ENCODE measurements at regions of chr4 and their contacts with region 1.

Region 1: GRCh38 chr4:87679449-87680169 is 29.5 kb downstream of the DMP1 start:
- DNase-seq: peak; percentile 14 to 87 (median 69)

Region 2: DNA sequence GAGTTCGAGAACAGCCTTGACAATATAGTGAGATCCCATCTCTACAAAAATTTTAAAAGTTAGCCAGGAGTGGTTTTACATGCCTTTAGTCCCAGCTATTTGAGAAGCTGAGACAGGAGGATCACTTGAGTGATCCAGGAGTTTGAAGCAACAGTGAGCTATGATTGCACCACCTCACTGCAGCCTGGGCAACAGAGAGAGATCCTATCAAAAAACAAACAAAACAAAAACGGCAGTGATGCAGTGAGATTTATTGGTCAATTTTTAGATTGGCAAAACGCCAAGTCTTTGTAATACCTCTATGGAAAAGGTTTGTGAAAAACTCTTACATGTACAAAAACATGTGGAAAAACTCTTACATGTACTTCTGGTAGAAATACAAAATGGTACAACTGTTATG is 994.2 kb before region 1 on chr4:
- intact Hi-C with region 1: no loop called
- DNase-seq: no peak

Region 3: DNA sequence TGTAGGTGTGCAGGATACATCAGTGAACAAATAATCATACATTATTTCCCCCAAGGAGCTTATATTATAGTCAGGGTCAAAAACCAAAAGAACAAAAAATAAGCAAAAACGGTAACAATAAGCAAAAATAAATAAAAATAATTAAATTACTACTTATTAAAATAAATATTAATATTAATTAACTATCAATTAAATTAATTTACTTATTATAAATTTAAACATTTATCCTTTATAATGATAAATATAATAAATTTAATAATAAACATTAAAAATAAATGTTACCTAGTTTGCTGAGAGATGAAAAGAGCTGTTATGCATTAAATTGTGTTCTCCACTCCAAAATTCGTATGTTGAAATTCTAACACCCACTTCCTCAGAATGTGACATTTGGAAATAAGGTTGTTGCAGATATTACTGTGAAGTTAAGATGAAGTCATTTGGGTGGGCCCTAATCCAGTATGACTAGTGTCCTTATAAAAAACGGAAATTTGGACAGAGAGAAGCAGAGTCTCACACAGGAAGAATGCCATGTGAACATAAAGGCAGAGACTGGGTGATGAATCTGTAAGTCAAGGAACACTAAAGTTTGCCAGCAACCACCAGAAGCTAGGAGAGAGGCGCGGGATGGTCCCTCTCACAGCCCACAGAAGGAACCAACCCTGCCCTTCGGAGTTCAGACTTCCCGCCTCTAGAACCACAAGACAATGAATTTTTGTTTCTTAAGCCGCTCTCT is 52.6 kb after region 1 on chr4:
- intact Hi-C with region 1: no loop called
- DNase-seq: no peak

Region 4: DNA sequence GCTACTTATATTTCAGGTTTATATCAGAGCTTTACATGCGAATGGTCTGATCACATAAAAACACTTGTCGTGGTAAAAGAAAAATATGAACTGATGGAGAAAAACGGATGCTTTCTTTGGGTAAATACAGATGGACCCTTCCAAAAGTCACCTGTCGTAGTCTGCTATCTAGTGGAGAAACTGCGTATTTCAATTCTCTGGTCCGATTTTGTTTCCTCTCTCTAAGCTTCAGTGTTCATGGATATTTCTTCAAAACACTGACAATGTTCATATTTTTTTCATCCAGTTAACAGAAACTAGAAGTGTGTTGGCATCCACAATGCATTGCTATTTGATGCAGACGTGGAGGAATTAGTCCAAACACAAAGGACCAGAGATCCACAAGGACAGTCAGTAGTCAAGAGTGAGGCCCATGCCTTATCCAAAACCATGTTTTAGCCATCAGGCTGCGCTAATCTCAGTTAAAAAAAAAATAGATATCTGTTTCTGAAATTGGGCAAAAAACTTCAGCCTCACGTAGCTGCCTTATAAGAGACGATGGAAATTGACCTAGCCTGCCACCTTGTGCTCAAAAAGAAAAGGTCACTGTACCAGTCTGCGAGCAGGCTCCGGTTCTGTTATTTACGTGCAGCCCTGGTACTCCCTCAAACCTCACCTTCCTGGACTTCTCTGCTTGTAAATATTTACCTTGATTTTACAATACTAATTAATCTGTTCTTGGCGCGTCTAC is 169.2 kb after region 1 on chr4:
- intact Hi-C with region 1: loop called (anchors 2 kb)
- DNase-seq: peak in 41 of 42 donors; percentile 35 to 89 (median 74)

Measured in head of caudate nucleus (tissue), 42 donors.